ENCODE measurements at regions of chr16 and their contacts with region 1.

Region 1: DNA sequence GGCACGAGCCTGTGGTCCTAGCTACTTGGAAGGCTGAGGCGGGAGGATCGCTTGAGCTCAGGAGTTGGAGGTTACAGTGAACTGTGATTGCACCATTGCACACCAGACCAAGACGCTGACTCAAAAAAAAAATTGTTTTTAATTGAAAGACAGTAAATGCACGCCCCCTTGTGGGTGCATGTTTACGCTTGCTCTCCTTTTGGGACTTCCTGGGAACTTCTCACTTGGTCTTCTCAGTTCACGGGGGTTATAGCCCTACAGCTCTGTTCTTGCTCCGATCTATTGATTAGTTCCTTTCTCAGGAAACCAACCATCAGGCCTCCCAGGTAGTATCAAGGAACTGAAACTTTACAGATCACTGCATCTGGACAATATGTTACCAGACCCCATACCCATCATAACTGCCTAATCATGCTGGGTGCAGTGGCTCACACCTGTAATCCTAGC is 14.2 kb upstream of the RIPOR1 start:
- DNase-seq: peak; percentile 94

Region 2: GRCh38 chr16:67499106-67499505 is 15.3 kb before region 1 on chr16:
- intact Hi-C with region 1: loop called in 1 of 2 experiments (anchors 2 kb)
- DNase-seq: no peak

Region 3: DNA sequence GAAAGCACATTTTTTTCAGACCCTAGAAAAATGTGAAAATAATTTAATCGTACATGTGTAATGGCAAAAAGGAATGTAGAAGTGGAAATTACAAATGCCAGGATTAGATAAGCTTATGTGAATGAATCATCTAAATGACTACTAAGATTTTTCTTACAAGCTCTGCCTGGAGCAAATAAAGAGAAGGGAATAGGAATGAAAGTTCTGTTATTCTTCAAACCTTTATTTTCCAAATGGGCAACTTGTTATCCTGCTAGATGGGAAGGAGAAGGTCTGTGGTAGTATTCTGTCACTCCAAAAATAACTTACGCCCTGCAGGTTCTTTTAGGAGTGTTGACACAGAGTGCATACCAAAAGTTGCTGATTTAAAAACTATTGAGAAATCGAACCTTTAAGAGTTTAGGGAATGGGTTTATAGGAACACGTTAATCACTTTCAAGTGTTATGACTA is 57.6 kb after region 1 on chr16:
- intact Hi-C with region 1: no loop called
- DNase-seq: no peak